GM23248 (cell line): ENCODE measurements at regions of chr19 and their contacts with region 1.

Region 1: DNA sequence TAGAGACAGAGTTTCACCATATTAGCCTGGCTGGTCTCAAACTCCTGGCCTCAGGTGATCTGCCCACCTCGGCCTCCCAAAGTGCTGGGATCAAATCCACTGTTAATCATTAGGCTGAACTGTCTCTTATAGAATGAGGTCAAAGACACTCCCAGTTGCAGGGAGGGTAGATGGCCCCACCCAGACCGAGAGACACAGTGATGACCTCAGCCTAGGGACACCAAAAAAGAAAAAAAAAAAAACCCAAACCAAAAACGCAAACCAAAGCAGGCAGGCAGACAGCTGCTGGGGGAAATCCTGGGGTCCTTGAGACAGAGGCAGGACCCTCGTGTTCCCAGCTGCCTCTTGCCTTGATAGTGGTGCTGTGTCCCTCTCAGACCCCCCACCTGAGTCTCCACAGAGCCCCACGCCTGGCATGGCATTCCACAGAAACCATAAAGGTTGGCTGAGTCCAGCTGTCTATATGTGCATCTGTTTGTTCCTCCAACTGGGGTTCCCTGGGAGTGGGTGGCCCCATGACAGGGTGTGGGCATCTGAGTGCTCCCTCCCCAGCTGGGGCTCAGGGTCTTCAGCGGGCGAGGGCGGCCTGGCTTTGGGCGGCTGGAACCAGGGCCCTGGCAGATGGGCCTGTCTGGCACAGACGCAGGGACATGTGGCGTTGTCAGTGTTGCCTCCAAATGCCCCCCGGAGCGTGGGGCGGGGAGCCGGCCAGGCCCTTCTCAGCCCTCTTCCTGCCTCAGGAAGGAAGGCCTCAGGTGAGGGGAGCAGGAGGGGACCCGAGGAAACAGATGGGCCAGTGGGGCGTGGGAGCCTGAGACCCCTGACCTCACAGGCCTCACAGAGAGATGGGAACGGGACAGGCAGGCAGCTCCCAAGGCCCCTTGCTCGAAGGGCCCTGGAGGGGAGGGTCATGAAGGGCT is 5.2 kb downstream of the DAND5 start:
- DNase-seq: peak; percentile 51
- H3K4me3 ChIP-seq: no peak overlapping the region
- H3K27ac ChIP-seq: no peak overlapping the region
- H3K4me1 ChIP-seq: peaks cover 3% of the 10 kb centered on the region
- H3K27me3 ChIP-seq: no peaks in the 10 kb centered on the region

Region 2: DNA sequence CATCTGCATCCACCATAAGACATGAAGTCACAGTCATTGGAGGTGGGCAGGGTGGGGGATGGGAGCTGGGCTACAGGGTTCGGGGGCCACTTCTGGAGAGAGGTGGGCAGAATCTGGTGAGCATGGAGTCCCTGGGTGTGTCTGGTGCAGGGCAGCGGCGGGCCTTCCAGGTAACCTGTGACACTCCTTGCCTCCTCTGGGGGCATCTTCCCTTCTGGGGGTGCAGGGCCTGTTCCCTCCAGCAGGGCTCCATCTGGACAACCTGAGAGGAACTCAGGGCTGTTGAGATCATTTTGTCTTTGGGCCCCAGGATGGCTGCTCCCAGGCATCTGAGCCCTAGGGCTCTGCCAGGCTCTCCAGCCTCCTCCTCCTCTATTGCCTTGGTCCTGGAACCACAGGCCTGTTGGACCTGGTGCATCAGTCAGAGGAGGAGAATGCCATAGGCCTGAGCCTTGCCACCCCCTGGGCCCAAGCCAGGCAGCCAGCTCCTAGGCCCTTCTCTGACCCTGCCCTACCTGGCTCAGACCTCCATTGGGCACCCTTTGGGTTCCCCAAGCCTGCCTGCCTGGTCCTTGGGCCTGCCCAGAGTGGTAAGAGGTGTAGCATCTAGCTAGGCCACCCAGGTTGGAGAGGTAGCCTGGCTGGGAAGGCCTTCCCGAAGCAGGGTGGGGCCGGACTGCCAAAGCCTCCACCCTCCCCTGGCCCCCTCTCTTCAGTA is 114.7 kb after region 1 on chr19:
- in situ Hi-C with region 1: no loop called
- DNase-seq: peak; percentile 69
- H3K4me3 ChIP-seq: no peak overlapping the region
- H3K27ac ChIP-seq: peak overlapping the region; percentile 78
- H3K4me1 ChIP-seq: peaks cover 25% of the 10 kb centered on the region
- H3K27me3 ChIP-seq: no peaks in the 10 kb centered on the region

Region 3: DNA sequence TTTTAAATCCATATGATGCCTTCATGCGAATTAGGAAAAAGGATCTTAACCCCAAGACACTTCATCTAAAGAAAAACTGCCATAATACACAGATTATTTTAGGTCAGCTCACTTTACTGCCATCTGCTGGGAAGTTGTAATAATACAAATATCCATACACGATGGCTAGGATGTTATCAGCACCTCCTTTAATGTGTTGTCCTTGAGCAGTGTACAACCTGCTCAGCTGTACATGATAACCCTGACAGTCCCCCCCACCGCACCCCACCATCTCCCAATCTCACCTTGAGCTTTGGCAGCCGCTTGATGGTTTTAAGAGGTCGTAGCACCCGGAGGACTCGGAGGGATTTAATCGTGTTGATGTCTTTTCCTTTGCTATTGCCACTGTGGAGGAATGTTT is 287.9 kb after region 1 on chr19:
- in situ Hi-C with region 1: loop called (anchors 10 kb)
- DNase-seq: peak; percentile 65
- H3K4me3 ChIP-seq: no peak overlapping the region
- H3K27ac ChIP-seq: no peak overlapping the region
- H3K4me1 ChIP-seq: peaks cover 18% of the 10 kb centered on the region
- H3K27me3 ChIP-seq: no peaks in the 10 kb centered on the region